Naive thymus-derived CD4-positive, alpha-beta T cell (primary cell): ENCODE measurements at regions of chr2 and their contacts with region 1.

Region 1: GRCh38 chr2:112764071-112765044 is at the start of gene CKAP2L:
- DNase-seq: peak; percentile 85 to 97 (median 94)
- ATAC-seq: peak; percentile 99
- H3K4me3 ChIP-seq: peak within 1 kb of the TSS; percentile 82
- H3K4me3 Mint-ChIP-seq: peak within 1 kb of the TSS; percentile 90 to 97 (median 92)
- H3K27ac ChIP-seq: peak within 1 kb of the TSS; percentile 65
- H3K27ac Mint-ChIP-seq: peak within 1 kb of the TSS; percentile 29 to 95 (median 71)
- H3K4me1 ChIP-seq: peaks cover 12 to 16% of the 10 kb centered on the region in 2 donors
- H3K4me1 Mint-ChIP-seq: peaks cover 15 to 61% (median 30%) of the 10 kb centered on the region in 7 donors
- H3K27me3 ChIP-seq: no peaks in the 10 kb centered on the region
- H3K27me3 Mint-ChIP-seq: no peaks in the 10 kb centered on the region
- total RNA-seq, gene CKAP2L: 0.69 to 36.2 (median 2.4) TPM in 3 of 5 experiments, not detected in the others

Region 2: DNA sequence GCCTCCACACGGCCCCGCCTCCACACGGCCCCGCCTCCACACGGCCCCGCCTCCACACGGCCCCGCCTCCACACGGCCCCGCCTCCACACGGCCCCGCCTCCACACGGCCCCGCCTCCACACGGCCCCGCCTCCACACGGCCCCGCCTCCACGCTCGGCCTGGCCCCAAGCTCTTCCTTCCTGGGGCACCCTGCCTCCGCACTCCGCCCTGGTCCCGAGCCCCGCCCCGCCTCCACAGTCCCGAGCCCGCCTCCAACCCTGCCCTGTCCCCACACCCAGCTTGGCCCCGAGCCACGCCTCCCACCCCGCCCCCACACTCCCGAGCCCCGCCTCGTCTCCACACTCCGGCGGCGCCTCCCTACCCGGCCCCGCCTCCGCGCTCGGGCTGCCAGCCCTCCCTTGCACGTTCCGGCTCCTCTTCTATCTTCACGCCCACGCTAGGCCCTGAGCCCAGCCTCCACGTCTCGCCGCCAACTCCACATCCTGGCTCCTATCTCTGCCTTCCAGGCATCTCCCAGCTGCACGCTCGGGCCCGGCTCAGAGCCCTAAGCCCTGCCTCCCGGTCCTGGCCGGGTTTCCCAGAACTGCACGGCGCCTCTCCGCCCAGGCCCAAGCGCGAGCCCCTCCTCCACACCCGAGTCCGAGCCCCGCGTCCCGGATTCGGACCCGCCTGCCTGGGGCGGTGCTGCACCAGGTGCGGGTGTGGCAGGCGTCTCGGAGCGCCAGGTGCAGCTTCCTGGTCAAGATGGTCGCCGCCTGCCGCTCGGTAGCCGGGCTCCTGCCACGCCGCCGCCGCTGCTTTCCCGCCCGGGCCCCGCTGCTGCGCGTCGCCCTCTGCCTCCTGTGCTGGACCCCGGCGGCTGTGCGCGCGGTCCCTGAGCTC is 709.3 kb before region 1 on chr2 and contains the start of gene TMEM87B:
- CTCF ChIA-PET with region 1: no interaction called
- POLR2A ChIA-PET with region 1: no interaction called
- intact Hi-C with region 1: loop called in 1 of 2 experiments (anchors 1 kb)
- DNase-seq: peak; percentile 90 to 98 (median 96)
- ATAC-seq: peak; percentile 80
- H3K4me3 ChIP-seq: peak within 1 kb of the TSS; percentile 85
- H3K4me3 Mint-ChIP-seq: peak within 1 kb of the TSS; percentile 80 to 100 (median 95)
- H3K27ac ChIP-seq: peak within 1 kb of the TSS; percentile 82
- H3K27ac Mint-ChIP-seq: peak within 1 kb of the TSS; percentile 92 to 100 (median 98)
- H3K4me1 ChIP-seq: peaks cover 16 to 19% of the 10 kb centered on the region in 2 donors
- H3K4me1 Mint-ChIP-seq: peaks cover 33 to 48% (median 42%) of the 10 kb centered on the region in 7 donors
- H3K27me3 ChIP-seq: no peaks in the 10 kb centered on the region
- H3K27me3 Mint-ChIP-seq: peaks cover 0 to 2% (median 0%) of the 10 kb centered on the region in 5 donors
- total RNA-seq, gene TMEM87B: 14.0 to 26.9 (median 17.4) TPM